Activated CD8-positive, alpha-beta T cell treated with anti-CD3 and anti-CD28 coated beads for 36 hours (primary cell): ENCODE measurements at regions of chr15 and their contacts with region 1.

Region 1: GRCh38 chr15:89129123-89129815 is 41.0 kb downstream of the ABHD2 start:
- DNase-seq: peak; percentile 78
- ATAC-seq: peak; percentile 76
- H3K4me3 Mint-ChIP-seq: no peak overlapping the region
- H3K27ac Mint-ChIP-seq: no peak overlapping the region
- H3K4me1 Mint-ChIP-seq: peaks cover 22% of the 10 kb centered on the region
- H3K27me3 Mint-ChIP-seq: no peaks in the 10 kb centered on the region
- CTCF ChIP-seq: peak; percentile 86

Region 2: GRCh38 chr15:88904624-88905327 is 224.5 kb before region 1 on chr15:
- CTCF ChIA-PET with region 1: interaction called, 13 read pairs
- POLR2A ChIA-PET with region 1: no interaction called
- intact Hi-C with region 1: no loop called
- DNase-seq: peak; percentile 96
- ATAC-seq: peak; percentile 98
- H3K4me3 Mint-ChIP-seq: no peak overlapping the region
- H3K27ac Mint-ChIP-seq: peak overlapping the region; percentile 69
- H3K4me1 Mint-ChIP-seq: peaks cover 22% of the 10 kb centered on the region
- H3K27me3 Mint-ChIP-seq: no peaks in the 10 kb centered on the region
- CTCF ChIP-seq: peak; percentile 84

Region 3: DNA sequence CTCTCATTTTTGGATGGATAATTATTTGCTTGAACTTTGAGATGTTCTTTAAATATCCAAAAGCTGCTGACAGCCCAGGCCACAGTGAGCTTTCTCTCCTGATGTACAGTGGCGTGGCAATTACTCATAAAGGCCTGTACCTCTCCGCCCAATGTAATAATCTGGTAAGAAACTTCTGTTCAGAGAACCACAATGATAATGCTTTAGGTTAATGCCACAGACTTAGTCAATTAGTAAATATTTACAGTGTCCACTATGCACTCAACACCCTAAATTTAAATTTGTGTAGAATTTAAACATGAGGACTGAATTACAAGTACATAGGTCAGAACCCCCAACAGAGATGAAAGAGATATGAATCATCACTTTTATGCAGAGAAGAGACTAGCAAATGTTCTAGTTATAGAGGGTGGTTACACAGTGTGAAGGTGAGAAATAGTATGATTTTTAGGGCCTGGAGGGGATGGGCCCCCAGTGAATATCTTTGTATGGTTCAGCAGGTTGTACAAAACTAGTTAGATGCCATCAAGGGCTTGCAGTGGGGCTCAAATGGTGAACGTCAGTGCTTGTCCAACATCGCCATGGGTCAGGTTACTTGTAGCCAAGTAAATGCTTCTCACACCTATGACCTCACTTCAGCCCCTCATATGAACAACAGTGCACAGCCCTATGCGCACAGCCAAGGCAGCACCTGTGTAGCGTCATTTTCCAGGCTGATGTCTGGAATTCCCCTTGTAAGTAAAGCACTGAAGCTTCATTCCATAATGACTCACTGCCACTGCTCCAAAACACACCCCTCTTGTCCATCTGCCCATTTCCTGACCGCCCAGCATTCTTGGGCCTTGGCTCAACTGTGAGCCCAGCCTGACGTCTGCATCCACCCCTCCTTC is 27.7 kb before region 1 on chr15:
- CTCF ChIA-PET with region 1: interaction called, 24 read pairs
- POLR2A ChIA-PET with region 1: no interaction called
- intact Hi-C with region 1: no loop called
- DNase-seq: no peak
- ATAC-seq: peak; percentile 77
- H3K4me3 Mint-ChIP-seq: no peak overlapping the region
- H3K27ac Mint-ChIP-seq: peak overlapping the region; percentile 25
- H3K4me1 Mint-ChIP-seq: peaks cover 17% of the 10 kb centered on the region
- H3K27me3 Mint-ChIP-seq: no peaks in the 10 kb centered on the region
- CTCF ChIP-seq: no peak

Region 4: GRCh38 chr15:89139400-89140166 is 10.3 kb after region 1 on chr15:
- CTCF ChIA-PET with region 1: interaction called, 58 read pairs
- POLR2A ChIA-PET with region 1: interaction called, 3 read pairs
- intact Hi-C with region 1: no loop called
- DNase-seq: no peak
- ATAC-seq: no peak
- H3K4me3 Mint-ChIP-seq: no peak overlapping the region
- H3K27ac Mint-ChIP-seq: no peak overlapping the region
- H3K4me1 Mint-ChIP-seq: peaks cover 46% of the 10 kb centered on the region
- H3K27me3 Mint-ChIP-seq: no peaks in the 10 kb centered on the region
- CTCF ChIP-seq: no peak

Region 5: GRCh38 chr15:89171136-89172072 is 42.1 kb after region 1 on chr15:
- CTCF ChIA-PET with region 1: interaction called, 17 read pairs
- POLR2A ChIA-PET with region 1: no interaction called
- intact Hi-C with region 1: no loop called
- DNase-seq: peak; percentile 49
- ATAC-seq: no peak
- H3K4me3 Mint-ChIP-seq: no peak overlapping the region
- H3K27ac Mint-ChIP-seq: no peak overlapping the region
- H3K4me1 Mint-ChIP-seq: peaks cover 29% of the 10 kb centered on the region
- H3K27me3 Mint-ChIP-seq: no peaks in the 10 kb centered on the region
- CTCF ChIP-seq: peak; percentile 80